Left ventricle myocardium superior (tissue), 1 donor: ENCODE measurements at regions of chr2 and their contacts with region 1.

Region 1: DNA sequence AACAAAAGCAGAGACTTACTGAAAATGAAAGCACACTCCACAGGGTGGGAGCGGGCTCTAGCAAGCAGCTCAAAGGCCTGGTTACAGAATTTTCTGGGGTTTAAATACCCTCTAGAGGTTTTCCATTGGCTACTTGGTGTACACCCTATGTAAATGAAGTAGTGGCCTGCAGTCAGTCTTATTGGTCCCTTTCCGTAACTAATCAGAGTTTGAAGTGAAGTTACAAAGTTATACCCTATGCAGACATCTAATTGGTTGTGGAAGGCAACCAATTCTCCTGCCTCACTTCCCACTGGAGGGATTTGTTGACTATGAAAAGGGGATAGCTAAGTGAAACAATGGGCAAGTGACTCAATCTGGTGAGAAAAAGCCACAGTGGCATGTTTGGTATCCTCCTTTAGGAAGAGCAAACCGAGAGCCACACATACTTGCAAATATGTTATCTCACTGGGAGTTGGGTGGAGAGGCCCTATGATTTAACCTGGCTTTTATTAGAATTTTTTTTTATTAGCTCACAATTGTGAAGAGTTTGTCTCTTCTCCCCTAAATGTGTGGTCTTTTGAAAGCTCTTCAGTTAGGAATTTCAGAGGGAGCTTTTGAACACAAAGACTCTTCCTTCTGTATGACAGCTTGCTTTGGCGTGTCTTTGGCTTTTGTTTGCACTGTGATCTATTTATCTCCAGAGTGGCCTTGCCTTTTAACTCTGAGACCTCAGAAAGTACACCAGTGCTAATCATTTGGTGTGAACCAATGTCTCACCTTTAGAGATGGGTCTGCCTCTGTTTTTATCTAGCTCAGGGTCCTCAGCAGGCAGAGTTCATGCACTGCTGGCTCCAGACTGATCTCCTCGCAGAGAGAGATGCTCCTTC is 69.6 kb downstream of the MAP4K4 start:
- DNase-seq: no peak
- ATAC-seq: peak; percentile 6

Region 2: DNA sequence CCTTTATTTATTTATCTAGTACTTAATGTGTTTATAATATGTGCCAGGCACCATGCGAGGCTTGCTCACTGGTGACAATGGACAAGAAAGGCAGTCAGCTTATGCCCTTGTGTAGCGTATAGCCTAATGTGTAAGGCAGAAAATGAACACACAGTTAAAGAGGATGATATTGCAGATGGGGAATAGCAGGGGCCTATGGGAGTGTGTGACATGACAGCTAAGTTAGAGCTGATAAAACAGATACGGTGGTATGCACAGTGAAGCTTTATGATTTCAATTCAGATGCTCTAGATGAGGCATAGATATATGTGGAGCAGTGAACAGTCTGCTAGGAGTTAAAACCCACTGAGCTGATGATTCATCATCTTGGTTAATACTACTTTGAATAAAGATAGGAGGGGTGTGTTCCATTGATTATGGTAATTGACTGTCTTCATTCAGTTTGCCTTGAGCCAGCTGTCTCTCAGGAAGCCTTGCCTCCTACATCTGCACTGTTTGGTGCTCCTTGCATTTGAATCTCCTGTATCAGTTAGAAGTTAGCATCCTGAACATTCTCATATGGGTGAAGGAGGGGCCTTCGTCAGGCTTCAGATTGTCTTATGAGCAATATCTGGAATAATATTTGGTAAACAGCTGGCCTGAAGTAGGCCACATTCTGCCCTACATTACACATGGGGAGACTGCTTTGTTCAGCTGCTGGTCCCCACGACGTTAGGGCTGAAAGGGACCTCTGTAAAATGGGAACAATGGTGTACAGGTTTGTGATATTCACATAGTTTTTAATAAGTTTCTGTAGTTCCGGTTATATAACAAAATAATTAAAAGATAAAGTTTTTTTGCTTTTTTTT is 56.4 kb before region 1 on chr2:
- intact Hi-C with region 1: loop called (anchors 10 kb)
- DNase-seq: no peak
- ATAC-seq: peak; percentile 29